HepG2 (cell line): ENCODE measurements at regions of chr15 and their contacts with region 1.

Region 1: GRCh38 chr15:89139400-89140166 is 51.3 kb downstream of the ABHD2 start:
- DNase-seq: peak; percentile 62
- ATAC-seq: peak; percentile 63
- H3K4me3 ChIP-seq: peak overlapping the region in 1 of 3 experiments; percentile 50; a peak in 3 of 6 replicates
- H3K27ac ChIP-seq: peak overlapping the region; percentile 90
- H3K4me1 ChIP-seq: peaks cover 82% of the 10 kb centered on the region
- H3K27me3 ChIP-seq: no peaks in the 10 kb centered on the region
- CTCF ChIP-seq: peak; percentile 45
- EP300 ChIP-seq: peak in 1 of 2 experiments; percentile 72; a peak in 1 of 4 replicates
- POLR2A ChIP-seq: no peak; a peak in 1 of 4 replicates
- RAD21 ChIP-seq: peak; percentile 26; the same call in 1 of the 2 replicates

Region 2: DNA sequence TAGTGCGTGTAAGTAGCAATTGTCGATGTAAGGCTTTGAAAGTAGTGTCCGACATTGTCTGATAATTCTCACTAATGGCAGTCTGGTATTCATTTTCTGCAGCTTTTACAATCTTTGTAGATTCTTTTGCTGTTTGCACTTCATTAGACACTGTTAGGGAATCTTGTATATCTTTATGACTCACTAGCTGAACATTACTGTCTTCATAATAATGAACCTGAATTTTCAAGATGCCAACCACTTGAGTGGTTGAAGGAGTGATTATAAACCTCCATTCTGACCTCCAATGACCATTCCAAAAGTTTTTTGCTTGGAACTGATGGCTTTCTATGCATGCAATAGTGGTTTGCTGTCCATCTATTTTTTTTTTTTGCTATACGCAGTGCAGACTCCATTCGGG is 150.0 kb before region 1 on chr15:
- CTCF ChIA-PET with region 1: no interaction called
- POLR2A ChIA-PET with region 1: no interaction called
- in situ Hi-C with region 1: no loop called
- intact Hi-C with region 1: no loop called
- DNase-seq: no peak
- ATAC-seq: no peak
- H3K4me3 ChIP-seq: no peak overlapping the region
- H3K27ac ChIP-seq: no peak overlapping the region
- H3K4me1 ChIP-seq: peaks cover 14% of the 10 kb centered on the region
- H3K27me3 ChIP-seq: no peaks in the 10 kb centered on the region
- CTCF ChIP-seq: no peak
- EP300 ChIP-seq: no peak
- POLR2A ChIP-seq: no peak
- RAD21 ChIP-seq: no peak

Region 3: GRCh38 chr15:89129123-89129815 is 10.3 kb before region 1 on chr15:
- CTCF ChIA-PET with region 1: no interaction called
- POLR2A ChIA-PET with region 1: interaction called, 45 read pairs
- in situ Hi-C with region 1: no loop called
- intact Hi-C with region 1: no loop called
- DNase-seq: no peak
- ATAC-seq: no peak
- H3K4me3 ChIP-seq: peak overlapping the region in 1 of 3 experiments; percentile 4; a peak in 1 of 6 replicates
- H3K27ac ChIP-seq: peak overlapping the region; percentile 76
- H3K4me1 ChIP-seq: peaks cover 100% of the 10 kb centered on the region
- H3K27me3 ChIP-seq: no peaks in the 10 kb centered on the region
- CTCF ChIP-seq: peak; percentile 75
- EP300 ChIP-seq: no peak
- POLR2A ChIP-seq: no peak
- RAD21 ChIP-seq: peak; percentile 77

Region 4: GRCh38 chr15:89164712-89165211 is 25.2 kb after region 1 on chr15:
- CTCF ChIA-PET with region 1: no interaction called
- POLR2A ChIA-PET with region 1: interaction called, 12 read pairs
- in situ Hi-C with region 1: no loop called
- intact Hi-C with region 1: loop called (anchors 2 kb)
- DNase-seq: peak; percentile 47
- ATAC-seq: peak; percentile 94
- H3K4me3 ChIP-seq: no peak overlapping the region
- H3K27ac ChIP-seq: peak overlapping the region; percentile 65
- H3K4me1 ChIP-seq: peaks cover 65% of the 10 kb centered on the region
- H3K27me3 ChIP-seq: no peaks in the 10 kb centered on the region
- CTCF ChIP-seq: no peak
- EP300 ChIP-seq: peak in 1 of 2 experiments; percentile 43; a peak in 1 of 4 replicates
- POLR2A ChIP-seq: no peak
- RAD21 ChIP-seq: no peak

Region 5: DNA sequence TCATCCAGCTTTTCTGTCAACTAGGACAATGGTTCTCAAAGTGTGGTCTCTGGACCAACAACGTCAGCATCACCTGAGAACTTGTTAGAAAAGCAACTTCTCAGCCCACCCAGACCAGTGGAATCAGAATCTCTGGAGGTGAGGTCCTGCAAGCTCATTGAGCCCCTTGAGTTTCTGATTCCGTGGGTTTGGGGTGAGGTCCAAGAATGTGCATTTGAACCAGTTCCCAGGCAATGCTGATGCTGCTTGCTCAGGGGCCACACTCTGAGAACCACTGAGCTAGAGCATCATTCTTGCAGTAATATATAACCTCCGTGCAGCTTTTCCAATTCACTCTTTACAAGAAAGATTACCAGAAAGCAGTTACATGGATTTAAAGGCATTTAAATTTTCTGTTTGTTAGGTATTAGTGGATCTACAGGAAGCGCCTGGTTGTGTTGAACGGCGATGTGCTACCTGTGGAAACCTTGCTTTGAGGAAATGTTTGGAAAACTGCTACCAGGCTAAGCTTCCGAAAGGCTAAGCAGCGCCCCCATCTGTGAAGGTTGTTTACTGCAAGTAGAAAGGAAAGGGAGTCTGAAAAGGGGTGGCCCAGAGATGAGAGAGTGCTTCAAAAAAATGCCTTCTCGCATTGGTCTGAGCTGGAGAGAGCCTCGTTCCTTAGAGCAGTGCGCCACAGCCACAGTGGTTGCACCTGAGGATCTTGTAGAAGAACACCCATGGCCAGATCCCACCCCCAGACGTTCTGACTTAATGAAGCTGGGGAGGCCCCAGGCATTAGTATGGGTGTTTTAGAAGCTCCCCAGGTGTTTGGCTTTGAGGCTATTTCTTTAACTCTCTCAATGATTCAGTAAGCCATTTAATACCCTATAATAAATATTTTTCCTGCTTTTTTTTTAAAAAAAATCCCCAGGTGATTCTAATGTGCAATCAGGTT is 31.8 kb after region 1 on chr15:
- CTCF ChIA-PET with region 1: interaction called, 4 read pairs
- POLR2A ChIA-PET with region 1: interaction called, 5 read pairs
- in situ Hi-C with region 1: loop called (anchors 5 kb)
- intact Hi-C with region 1: loop called (anchors 2 kb)
- DNase-seq: peak; percentile 62
- ATAC-seq: peak; percentile 83
- H3K4me3 ChIP-seq: no peak overlapping the region
- H3K27ac ChIP-seq: no peak overlapping the region
- H3K4me1 ChIP-seq: peaks cover 32% of the 10 kb centered on the region
- H3K27me3 ChIP-seq: no peaks in the 10 kb centered on the region
- CTCF ChIP-seq: peak; percentile 87
- EP300 ChIP-seq: no peak
- POLR2A ChIP-seq: no peak
- RAD21 ChIP-seq: peak; percentile 84

Region 6: GRCh38 chr15:89760303-89761008 is 620.9 kb after region 1 on chr15:
- CTCF ChIA-PET with region 1: no interaction called
- POLR2A ChIA-PET with region 1: no interaction called
- in situ Hi-C with region 1: no loop called
- intact Hi-C with region 1: no loop called
- DNase-seq: peak; percentile 61
- ATAC-seq: peak; percentile 91
- H3K4me3 ChIP-seq: peak overlapping the region in 1 of 3 experiments; percentile 53; a peak in 1 of 6 replicates
- H3K27ac ChIP-seq: no peak overlapping the region
- H3K4me1 ChIP-seq: peaks cover 54% of the 10 kb centered on the region
- H3K27me3 ChIP-seq: peaks cover 7 to 18% of the 10 kb centered on the region in 2 experiments
- CTCF ChIP-seq: peak; percentile 98
- EP300 ChIP-seq: no peak
- POLR2A ChIP-seq: no peak
- RAD21 ChIP-seq: peak; percentile 96